ENCODE measurements at regions of chr11 and their contacts with region 1.

Region 1: GRCh38 chr11:4072668-4073285 is 21.8 kb upstream of the RRM1 start:
- DNase-seq: peak; percentile 59
- ATAC-seq: peak; percentile 80
- H3K4me3 Mint-ChIP-seq: no peak overlapping the region
- H3K27ac Mint-ChIP-seq: no peak overlapping the region
- H3K4me1 Mint-ChIP-seq: peaks cover 26% of the 10 kb centered on the region
- H3K27me3 Mint-ChIP-seq: no peaks in the 10 kb centered on the region

Region 2: GRCh38 chr11:3807909-3808860 is 264.6 kb before region 1 on chr11 and contains the start of gene PGAP2:
- CTCF ChIA-PET with region 1: interaction called, 19 read pairs
- DNase-seq: peak; percentile 69
- ATAC-seq: peak; percentile 87
- H3K4me3 Mint-ChIP-seq: peak within 1 kb of the TSS; percentile 84
- H3K27ac Mint-ChIP-seq: peak within 1 kb of the TSS; percentile 84
- H3K4me1 Mint-ChIP-seq: peaks cover 15% of the 10 kb centered on the region
- H3K27me3 Mint-ChIP-seq: no peaks in the 10 kb centered on the region
- total RNA-seq, gene PGAP2: 22.7 to 23.5 TPM

Region 3: GRCh38 chr11:3841426-3842350 is 231.1 kb before region 1 on chr11:
- CTCF ChIA-PET with region 1: interaction called, 474 read pairs
- DNase-seq: peak; percentile 95
- ATAC-seq: peak; percentile 76
- H3K4me3 Mint-ChIP-seq: peak overlapping the region; percentile 92
- H3K27ac Mint-ChIP-seq: peak overlapping the region; percentile 96
- H3K4me1 Mint-ChIP-seq: peaks cover 42% of the 10 kb centered on the region
- H3K27me3 Mint-ChIP-seq: no peaks in the 10 kb centered on the region

Region 4: DNA sequence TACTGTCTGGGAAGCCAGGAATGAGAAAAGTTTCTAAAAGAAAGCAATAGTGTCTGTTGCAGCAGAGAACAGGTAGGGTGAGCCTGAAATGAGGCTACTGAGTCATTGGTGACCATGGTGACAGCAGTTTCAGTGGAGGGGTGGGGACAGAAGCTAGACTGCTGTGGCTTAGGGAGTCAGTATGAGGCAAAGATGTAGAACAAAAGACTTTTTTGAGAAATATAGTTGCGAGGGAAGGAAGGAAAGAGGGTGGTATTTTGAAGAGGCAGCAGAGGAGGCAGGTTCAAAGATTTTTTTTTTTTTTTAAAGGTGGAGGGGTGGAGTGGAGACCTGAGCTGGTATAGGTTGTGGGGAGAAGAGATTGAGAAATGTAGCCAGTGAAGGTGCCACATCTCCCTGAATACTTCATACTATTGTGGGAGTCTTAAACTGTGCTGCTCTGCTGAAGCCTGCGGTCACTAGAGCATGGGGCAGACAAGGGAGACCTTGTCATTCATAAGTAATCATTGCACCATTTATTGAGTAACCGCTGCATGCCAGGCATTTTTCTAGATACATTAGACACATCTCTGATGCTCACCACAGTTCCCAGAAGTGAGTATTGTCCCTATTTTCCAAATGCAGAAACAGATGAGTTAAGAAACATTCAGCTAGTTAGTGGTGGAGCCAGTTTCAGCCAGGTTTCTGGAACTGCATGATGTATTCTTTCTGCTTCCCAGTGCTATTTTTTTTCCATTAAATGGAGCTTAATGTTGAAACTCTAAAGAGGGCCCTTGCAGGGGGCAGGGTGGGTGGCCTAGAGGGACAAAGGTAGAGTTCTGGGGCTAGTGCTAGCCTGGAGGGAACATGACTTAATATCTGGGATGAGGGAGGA is 167.5 kb before region 1 on chr11:
- CTCF ChIA-PET with region 1: interaction called, 16 read pairs
- DNase-seq: peak; percentile 77
- ATAC-seq: peak; percentile 97
- H3K4me3 Mint-ChIP-seq: no peak overlapping the region
- H3K27ac Mint-ChIP-seq: peak overlapping the region; percentile 57
- H3K4me1 Mint-ChIP-seq: peaks cover 56% of the 10 kb centered on the region
- H3K27me3 Mint-ChIP-seq: no peaks in the 10 kb centered on the region

Region 5: GRCh38 chr11:3971756-3972404 is 100.9 kb before region 1 on chr11:
- CTCF ChIA-PET with region 1: interaction called, 10 read pairs
- DNase-seq: no peak
- ATAC-seq: no peak
- H3K4me3 Mint-ChIP-seq: no peak overlapping the region
- H3K27ac Mint-ChIP-seq: no peak overlapping the region
- H3K4me1 Mint-ChIP-seq: peaks cover 52% of the 10 kb centered on the region
- H3K27me3 Mint-ChIP-seq: no peaks in the 10 kb centered on the region

Region 6: DNA sequence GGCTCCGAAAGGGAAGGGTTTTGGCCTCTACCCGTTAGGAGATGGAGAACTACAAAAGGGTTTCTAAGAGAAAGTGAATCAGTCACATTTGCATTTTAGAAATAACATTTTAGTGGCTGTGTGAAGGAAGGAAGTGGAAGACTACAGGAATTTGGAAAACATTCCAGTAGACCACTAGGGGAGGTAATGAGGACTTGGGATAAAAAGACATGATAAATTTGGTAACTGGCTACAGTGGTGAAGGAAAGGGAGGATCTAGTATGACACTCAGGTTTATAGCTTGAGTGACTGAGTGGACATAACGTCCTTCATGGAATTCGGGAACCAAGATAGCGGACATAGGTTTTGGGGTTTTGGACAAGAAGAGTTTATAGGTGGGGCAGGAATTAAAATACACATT is 14.8 kb after region 1 on chr11:
- CTCF ChIA-PET with region 1: interaction called, 27 read pairs
- DNase-seq: no peak
- ATAC-seq: no peak
- H3K4me3 Mint-ChIP-seq: no peak overlapping the region
- H3K27ac Mint-ChIP-seq: no peak overlapping the region
- H3K4me1 Mint-ChIP-seq: peaks cover 50% of the 10 kb centered on the region
- H3K27me3 Mint-ChIP-seq: no peaks in the 10 kb centered on the region

Region 7: DNA sequence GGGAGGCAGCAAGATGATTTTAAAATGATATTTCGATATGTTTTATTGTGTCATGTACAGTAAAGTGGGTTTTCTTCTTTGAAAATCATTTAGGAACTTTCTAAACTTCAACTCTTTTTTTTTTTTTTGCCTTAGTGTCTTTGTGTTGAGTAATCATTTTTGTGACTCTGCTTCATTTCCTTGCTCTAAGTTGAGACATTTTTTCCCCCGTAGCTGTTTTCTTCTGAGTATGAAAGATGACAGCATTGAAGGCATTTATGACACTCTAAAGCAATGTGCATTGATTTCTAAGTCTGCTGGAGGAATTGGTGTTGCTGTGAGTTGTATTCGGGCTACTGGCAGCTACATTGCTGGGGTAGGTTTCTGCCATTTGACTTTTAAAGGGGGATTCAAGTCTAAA is 45.3 kb after region 1 on chr11:
- CTCF ChIA-PET with region 1: no interaction called
- DNase-seq: no peak
- ATAC-seq: no peak
- H3K4me3 Mint-ChIP-seq: no peak overlapping the region
- H3K27ac Mint-ChIP-seq: peak overlapping the region; percentile 33
- H3K4me1 Mint-ChIP-seq: peaks cover 18% of the 10 kb centered on the region
- H3K27me3 Mint-ChIP-seq: no peaks in the 10 kb centered on the region